Natural killer cell (primary cell): ENCODE measurements at regions of chr17 and their contacts with region 1.

Region 1: GRCh38 chr17:41322094-41322902 is 6.8 kb upstream of the KRTAP17-1 start:
- DNase-seq: peak in 1 of 2 donors; percentile 75
- ATAC-seq: peak; percentile 51 to 76 (median 64)
- H3K4me3 ChIP-seq: no peak overlapping the region
- H3K4me3 Mint-ChIP-seq: no peak overlapping the region
- H3K27ac ChIP-seq: no peak overlapping the region
- H3K27ac Mint-ChIP-seq: no peak overlapping the region
- H3K4me1 ChIP-seq: peaks cover 21% of the 10 kb centered on the region
- H3K4me1 Mint-ChIP-seq: no peaks in the 10 kb centered on the region
- H3K27me3 ChIP-seq: no peaks in the 10 kb centered on the region
- H3K27me3 Mint-ChIP-seq: peaks cover 0 to 5% of the 10 kb centered on the region in 2 donors
- CTCF ChIP-seq: peak; percentile 75

Region 2: GRCh38 chr17:40803617-40804082 is 518.6 kb before region 1 on chr17:
- intact Hi-C with region 1: loop called (anchors 10 kb)
- DNase-seq: peak; percentile 56 to 85
- ATAC-seq: peak; percentile 82 to 92 (median 87)
- H3K4me3 ChIP-seq: no peak overlapping the region
- H3K4me3 Mint-ChIP-seq: no peak overlapping the region
- H3K27ac ChIP-seq: no peak overlapping the region
- H3K27ac Mint-ChIP-seq: no peak overlapping the region
- H3K4me1 ChIP-seq: no peaks in the 10 kb centered on the region
- H3K4me1 Mint-ChIP-seq: no peaks in the 10 kb centered on the region
- H3K27me3 ChIP-seq: peaks cover 15% of the 10 kb centered on the region
- H3K27me3 Mint-ChIP-seq: peaks cover 29 to 52% of the 10 kb centered on the region in 2 donors
- CTCF ChIP-seq: peak; percentile 91

Region 3: DNA sequence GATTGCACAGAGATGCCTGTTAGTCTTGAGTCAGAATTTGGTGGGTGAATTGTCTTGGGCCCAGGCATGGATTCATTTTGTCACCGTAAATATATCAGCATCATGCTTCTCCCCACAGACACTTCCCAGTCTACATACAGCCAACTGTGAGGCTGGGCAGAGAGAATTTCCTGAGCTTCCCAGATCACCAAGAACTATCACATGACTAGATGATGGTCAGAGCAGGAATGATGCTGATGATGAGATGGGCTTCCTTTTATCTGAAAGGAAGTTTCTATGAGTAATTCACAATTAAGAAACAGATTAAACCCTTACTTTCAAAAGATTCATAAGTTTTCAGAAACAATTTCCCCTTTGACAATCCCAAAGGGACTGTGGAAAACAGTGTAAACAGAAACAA is 67.4 kb before region 1 on chr17:
- intact Hi-C with region 1: no loop called
- DNase-seq: peak in 1 of 2 donors; percentile 0
- ATAC-seq: no peak
- H3K4me3 ChIP-seq: no peak overlapping the region
- H3K4me3 Mint-ChIP-seq: no peak overlapping the region
- H3K27ac ChIP-seq: no peak overlapping the region
- H3K27ac Mint-ChIP-seq: no peak overlapping the region
- H3K4me1 ChIP-seq: no peaks in the 10 kb centered on the region
- H3K4me1 Mint-ChIP-seq: no peaks in the 10 kb centered on the region
- H3K27me3 ChIP-seq: peaks cover 2% of the 10 kb centered on the region
- H3K27me3 Mint-ChIP-seq: peaks cover 28 to 80% of the 10 kb centered on the region in 2 donors
- CTCF ChIP-seq: no peak